Posterior vena cava (tissue), 2 donors: ENCODE measurements at regions of chr7 and their contacts with region 1.

Region 1: GRCh38 chr7:3688071-3688470 is 387.0 kb downstream of the SDK1 start:
- DNase-seq: no peak

Region 2: GRCh38 chr7:3187444-3188040 is 500.5 kb before region 1 on chr7:
- intact Hi-C with region 1: loop called in 1 of 2 experiments (anchors 2 kb)
- DNase-seq: peak; percentile 10